BJ (cell line): ENCODE measurements at regions of chr15 and their contacts with region 1.

Region 1: GRCh38 chr15:55407949-55408791 is at the starts of genes CCPG1 and PIERCE2:
- DNase-seq: peak; percentile 69
- H3K4me3 ChIP-seq: peak within 1 kb of the TSS; percentile 81
- H3K27me3 ChIP-seq: no peaks in the 10 kb centered on the region
- CTCF ChIP-seq: peak; percentile 74
- polyA plus RNA-seq, gene CCPG1: 33.8 and 79.0 TPM in 2 replicates
- polyA plus RNA-seq, gene PIERCE2: 1.4 and 2.8 TPM in 2 replicates

Region 2: GRCh38 chr15:55394694-55395093 is 13.5 kb before region 1 on chr15:
- CTCF ChIA-PET with region 1: interaction called, 20 read pairs
- POLR2A ChIA-PET with region 1: no interaction called
- DNase-seq: no peak
- H3K4me3 ChIP-seq: no peak overlapping the region
- H3K27me3 ChIP-seq: no peaks in the 10 kb centered on the region
- CTCF ChIP-seq: no peak

Region 3: GRCh38 chr15:55434989-55435825 is 27.0 kb after region 1 on chr15:
- CTCF ChIA-PET with region 1: interaction called, 14 read pairs
- POLR2A ChIA-PET with region 1: no interaction called
- DNase-seq: no peak
- H3K4me3 ChIP-seq: no peak overlapping the region
- H3K27me3 ChIP-seq: no peaks in the 10 kb centered on the region
- CTCF ChIP-seq: peak; percentile 68

Region 4: GRCh38 chr15:55507567-55507966 is 99.4 kb after region 1 on chr15:
- CTCF ChIA-PET with region 1: no interaction called
- POLR2A ChIA-PET with region 1: no interaction called
- DNase-seq: no peak
- H3K4me3 ChIP-seq: no peak overlapping the region
- H3K27me3 ChIP-seq: no peaks in the 10 kb centered on the region
- CTCF ChIP-seq: no peak

Region 5: GRCh38 chr15:55526559-55527036 is 118.4 kb after region 1 on chr15:
- CTCF ChIA-PET with region 1: no interaction called
- POLR2A ChIA-PET with region 1: no interaction called
- DNase-seq: no peak
- H3K4me3 ChIP-seq: no peak overlapping the region
- H3K27me3 ChIP-seq: no peaks in the 10 kb centered on the region
- CTCF ChIP-seq: peak; percentile 71

Region 6: DNA sequence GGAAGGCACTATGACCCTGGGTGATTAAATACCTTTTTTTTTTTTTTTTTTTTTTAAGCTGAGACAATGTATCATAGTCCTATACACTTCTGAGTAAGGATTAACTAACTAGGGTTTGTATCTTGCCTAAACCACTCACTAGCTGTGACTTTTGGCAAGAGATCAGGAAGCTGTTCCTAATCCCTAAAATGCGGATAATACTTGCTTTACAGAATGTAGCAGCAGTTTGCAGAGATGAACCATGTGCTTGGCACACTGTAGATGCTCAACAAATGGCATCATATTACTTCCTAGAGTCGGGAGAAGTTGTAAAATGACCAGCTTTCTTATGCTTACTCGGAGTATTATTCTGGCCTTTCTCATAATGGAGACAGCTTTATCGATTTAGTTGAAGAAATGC is 205.6 kb after region 1 on chr15:
- CTCF ChIA-PET with region 1: no interaction called
- POLR2A ChIA-PET with region 1: no interaction called
- DNase-seq: no peak
- H3K4me3 ChIP-seq: no peak overlapping the region
- H3K27me3 ChIP-seq: no peaks in the 10 kb centered on the region
- CTCF ChIP-seq: no peak